ENCODE measurements at regions of chr1 and their contacts with region 1.

Region 1: GRCh38 chr1:167936068-167936929 is at the start of gene DCAF6:
- DNase-seq: peak; percentile 96
- ATAC-seq: peak; percentile 85
- H3K4me3 Mint-ChIP-seq: peak within 1 kb of the TSS; percentile 91
- H3K27ac Mint-ChIP-seq: peak within 1 kb of the TSS; percentile 96
- H3K4me1 Mint-ChIP-seq: peaks cover 28% of the 10 kb centered on the region
- H3K27me3 Mint-ChIP-seq: no peaks in the 10 kb centered on the region
- total RNA-seq, gene DCAF6: 28.2 to 28.5 TPM

Region 2: DNA sequence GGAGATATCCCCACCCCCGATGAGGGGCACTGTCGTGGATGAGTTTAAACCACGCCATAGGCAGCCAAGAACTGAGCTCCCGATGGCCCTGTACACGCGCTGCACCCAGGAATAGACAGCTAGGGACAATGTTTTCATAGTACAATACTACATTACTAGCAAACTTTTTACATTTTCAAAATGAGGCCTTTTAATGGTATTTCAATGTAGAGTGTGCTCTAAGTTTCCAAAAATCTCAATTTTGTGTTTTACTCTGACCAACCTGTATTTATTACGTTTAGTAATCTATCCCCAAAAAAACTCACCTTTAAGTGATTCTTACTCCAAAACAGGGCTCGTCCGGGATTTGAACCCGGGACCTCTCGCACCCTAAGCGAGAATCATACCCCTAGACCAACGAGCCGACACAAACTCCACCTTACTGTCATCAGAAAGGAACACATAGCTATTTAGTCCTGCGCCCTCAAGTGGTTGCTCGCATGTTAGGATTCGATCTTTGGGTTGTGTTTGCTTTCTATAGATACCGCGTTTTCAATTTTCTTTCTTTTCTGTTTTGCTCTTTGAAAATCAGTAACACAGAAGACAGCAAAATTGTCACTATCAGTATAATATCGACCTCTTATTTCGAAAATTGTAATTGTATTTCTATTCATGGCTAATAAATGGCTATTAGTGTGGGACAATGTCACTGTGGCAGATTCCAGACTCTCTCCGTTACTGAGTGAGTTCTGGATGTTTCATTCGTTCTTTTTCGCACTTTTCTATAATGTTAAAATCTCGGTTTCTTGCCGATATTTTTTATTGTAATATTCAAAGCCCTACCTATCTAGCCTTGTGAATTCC is 220.9 kb before region 1 on chr1:
- POLR2A ChIA-PET with region 1: interaction called, 18 read pairs
- DNase-seq: peak; percentile 84
- ATAC-seq: peak; percentile 51
- H3K4me3 Mint-ChIP-seq: peak overlapping the region; percentile 91
- H3K27ac Mint-ChIP-seq: peak overlapping the region; percentile 97
- H3K4me1 Mint-ChIP-seq: peaks cover 39% of the 10 kb centered on the region
- H3K27me3 Mint-ChIP-seq: peaks cover 3% of the 10 kb centered on the region

Region 3: GRCh38 chr1:168007691-168008090 is 71.4 kb after region 1 on chr1:
- POLR2A ChIA-PET with region 1: interaction called, 10 read pairs
- DNase-seq: no peak
- ATAC-seq: no peak
- H3K4me3 Mint-ChIP-seq: no peak overlapping the region
- H3K27ac Mint-ChIP-seq: no peak overlapping the region
- H3K4me1 Mint-ChIP-seq: no peaks in the 10 kb centered on the region
- H3K27me3 Mint-ChIP-seq: no peaks in the 10 kb centered on the region